PC-9 (cell line): ENCODE measurements at regions of chrX and their contacts with region 1.

Region 1: GRCh38 chrX:116198810-116199209 is 28.3 kb downstream of the AGTR2 start:
- DNase-seq: no peak
- H3K4me3 ChIP-seq: no peak overlapping the region
- H3K27ac ChIP-seq: no peak overlapping the region
- H3K4me1 ChIP-seq: no peaks in the 10 kb centered on the region
- H3K27me3 ChIP-seq: no peaks in the 10 kb centered on the region
- CTCF ChIP-seq: peak; percentile 33; the same call in 1 of the 2 replicates

Region 2: DNA sequence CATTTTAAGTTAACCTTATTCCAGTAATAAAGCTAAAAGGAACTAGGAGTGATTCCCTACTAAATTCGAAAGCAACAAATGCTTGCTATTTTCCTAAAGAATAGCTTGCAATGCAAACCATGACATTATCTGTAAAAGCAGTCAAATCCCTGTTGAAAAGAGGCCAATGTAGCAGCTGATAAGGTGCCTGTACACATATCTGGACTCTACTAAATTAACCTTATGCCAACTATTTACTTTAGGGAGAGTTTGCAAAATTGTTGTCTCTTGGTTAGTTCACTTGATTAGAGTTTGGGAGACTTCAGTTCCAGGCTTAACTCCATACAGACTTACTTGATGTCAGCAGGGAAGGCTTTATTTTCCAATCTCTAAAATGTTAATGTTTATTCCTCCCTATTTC is 1187.4 kb before region 1 on chrX:
- CTCF ChIA-PET with region 1: no interaction called
- POLR2A ChIA-PET with region 1: no interaction called
- intact Hi-C with region 1: no loop called
- DNase-seq: no peak
- H3K4me3 ChIP-seq: no peak overlapping the region
- H3K27ac ChIP-seq: no peak overlapping the region
- H3K4me1 ChIP-seq: peaks cover 19% of the 10 kb centered on the region
- H3K27me3 ChIP-seq: no peaks in the 10 kb centered on the region
- CTCF ChIP-seq: no peak

Region 3: GRCh38 chrX:115968436-115969252 is 230.2 kb before region 1 on chrX:
- CTCF ChIA-PET with region 1: no interaction called
- POLR2A ChIA-PET with region 1: no interaction called
- intact Hi-C with region 1: loop called (anchors 10 kb)
- DNase-seq: peak; percentile 53 to 68
- H3K4me3 ChIP-seq: peak overlapping the region; percentile 64
- H3K27ac ChIP-seq: peak overlapping the region; percentile 63
- H3K4me1 ChIP-seq: 0 out of 2 replicates have a peak, but pooled peaks cover 6% of the 10 kb centered on the region
- H3K27me3 ChIP-seq: no peaks in the 10 kb centered on the region
- CTCF ChIP-seq: no peak

Region 4: DNA sequence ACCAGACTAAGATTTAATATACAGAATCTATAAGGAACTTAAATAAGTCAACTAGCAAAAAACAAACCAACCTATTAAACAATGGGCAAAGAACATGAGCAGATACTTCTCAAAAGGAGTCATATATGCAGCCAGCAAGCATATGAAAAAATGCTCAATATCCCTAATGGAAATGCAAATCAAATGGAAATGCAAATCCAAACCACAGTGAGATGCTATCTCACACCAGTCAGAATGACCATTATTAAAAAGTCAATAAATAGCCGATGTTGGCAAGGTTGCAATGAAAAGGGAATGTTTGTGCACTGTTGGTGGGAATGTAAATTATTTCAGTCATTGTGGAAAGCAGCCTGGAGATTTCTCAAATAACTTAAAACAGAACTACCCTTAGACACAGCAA is 140.6 kb after region 1 on chrX:
- CTCF ChIA-PET with region 1: no interaction called
- POLR2A ChIA-PET with region 1: no interaction called
- intact Hi-C with region 1: no loop called
- DNase-seq: no peak
- H3K4me3 ChIP-seq: no peak overlapping the region
- H3K27ac ChIP-seq: no peak overlapping the region
- H3K4me1 ChIP-seq: no peaks in the 10 kb centered on the region
- H3K27me3 ChIP-seq: no peaks in the 10 kb centered on the region
- CTCF ChIP-seq: no peak

Region 5: DNA sequence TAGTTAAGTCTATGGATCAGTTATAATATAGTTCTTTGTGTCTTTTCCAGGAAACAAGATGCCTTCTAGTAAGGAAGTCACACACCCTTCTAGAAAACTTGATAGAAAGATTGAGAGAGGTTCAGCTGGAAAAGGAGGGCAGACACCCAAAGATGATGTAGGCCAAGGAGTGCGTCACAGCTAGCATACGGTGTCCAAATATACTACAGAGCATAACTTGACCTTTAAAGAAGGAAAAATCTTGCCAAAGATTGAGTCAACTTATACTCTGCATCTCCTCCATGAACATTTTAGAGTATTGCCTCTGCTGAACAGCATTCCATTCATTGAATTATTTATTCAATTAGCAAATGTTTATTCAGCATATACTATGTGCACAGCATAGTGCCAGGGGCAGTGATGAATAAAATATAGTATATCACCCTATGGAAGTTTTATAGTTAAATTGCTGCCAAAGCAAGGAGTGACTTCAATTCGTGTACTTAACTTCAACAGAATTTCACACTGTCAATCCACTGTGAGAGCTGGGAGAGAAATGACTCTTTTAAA is 185.7 kb after region 1 on chrX:
- CTCF ChIA-PET with region 1: no interaction called
- POLR2A ChIA-PET with region 1: no interaction called
- intact Hi-C with region 1: no loop called
- DNase-seq: no peak
- H3K4me3 ChIP-seq: no peak overlapping the region
- H3K27ac ChIP-seq: no peak overlapping the region
- H3K4me1 ChIP-seq: no peaks in the 10 kb centered on the region
- H3K27me3 ChIP-seq: no peaks in the 10 kb centered on the region
- CTCF ChIP-seq: no peak